Prostate gland (tissue), 2 donors: ENCODE measurements at regions of chr2 and their contacts with region 1.

Region 1: DNA sequence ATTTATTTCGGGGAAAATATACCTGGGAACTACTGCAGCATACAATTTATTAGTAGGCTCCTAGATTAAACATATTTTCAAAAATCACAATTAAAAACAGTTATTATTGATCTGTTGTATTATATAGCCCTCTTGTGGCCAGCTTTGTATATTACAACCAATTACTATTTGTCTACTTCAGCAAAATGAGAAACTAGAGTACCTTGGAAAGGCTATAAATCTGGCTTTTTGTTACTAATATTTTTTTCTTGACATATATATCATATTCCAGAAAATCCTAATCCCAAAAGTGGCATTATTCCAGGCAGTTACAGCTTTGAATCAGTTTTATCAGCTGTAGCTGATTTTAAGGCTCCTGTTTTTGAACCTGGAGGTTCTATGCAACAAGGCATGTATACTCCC is 101.2 kb downstream of the UBR3 start:
- DNase-seq: peak; percentile 13
- H3K4me3 ChIP-seq: no peak overlapping the region
- H3K27ac ChIP-seq: no peak overlapping the region
- H3K4me1 ChIP-seq: no peaks in the 10 kb centered on the region
- H3K27me3 ChIP-seq: no peaks in the 10 kb centered on the region
- CTCF ChIP-seq: peak; percentile 38 to 73 (median 69)
- POLR2A ChIP-seq: no peak

Region 2: GRCh38 chr2:169513926-169514325 is 414.5 kb before region 1 on chr2:
- intact Hi-C with region 1: no loop called
- DNase-seq: no peak
- H3K4me3 ChIP-seq: no peak overlapping the region
- H3K27ac ChIP-seq: no peak overlapping the region
- H3K4me1 ChIP-seq: no peaks in the 10 kb centered on the region
- H3K27me3 ChIP-seq: no peaks in the 10 kb centered on the region
- CTCF ChIP-seq: no peak
- POLR2A ChIP-seq: no peak

Region 3: DNA sequence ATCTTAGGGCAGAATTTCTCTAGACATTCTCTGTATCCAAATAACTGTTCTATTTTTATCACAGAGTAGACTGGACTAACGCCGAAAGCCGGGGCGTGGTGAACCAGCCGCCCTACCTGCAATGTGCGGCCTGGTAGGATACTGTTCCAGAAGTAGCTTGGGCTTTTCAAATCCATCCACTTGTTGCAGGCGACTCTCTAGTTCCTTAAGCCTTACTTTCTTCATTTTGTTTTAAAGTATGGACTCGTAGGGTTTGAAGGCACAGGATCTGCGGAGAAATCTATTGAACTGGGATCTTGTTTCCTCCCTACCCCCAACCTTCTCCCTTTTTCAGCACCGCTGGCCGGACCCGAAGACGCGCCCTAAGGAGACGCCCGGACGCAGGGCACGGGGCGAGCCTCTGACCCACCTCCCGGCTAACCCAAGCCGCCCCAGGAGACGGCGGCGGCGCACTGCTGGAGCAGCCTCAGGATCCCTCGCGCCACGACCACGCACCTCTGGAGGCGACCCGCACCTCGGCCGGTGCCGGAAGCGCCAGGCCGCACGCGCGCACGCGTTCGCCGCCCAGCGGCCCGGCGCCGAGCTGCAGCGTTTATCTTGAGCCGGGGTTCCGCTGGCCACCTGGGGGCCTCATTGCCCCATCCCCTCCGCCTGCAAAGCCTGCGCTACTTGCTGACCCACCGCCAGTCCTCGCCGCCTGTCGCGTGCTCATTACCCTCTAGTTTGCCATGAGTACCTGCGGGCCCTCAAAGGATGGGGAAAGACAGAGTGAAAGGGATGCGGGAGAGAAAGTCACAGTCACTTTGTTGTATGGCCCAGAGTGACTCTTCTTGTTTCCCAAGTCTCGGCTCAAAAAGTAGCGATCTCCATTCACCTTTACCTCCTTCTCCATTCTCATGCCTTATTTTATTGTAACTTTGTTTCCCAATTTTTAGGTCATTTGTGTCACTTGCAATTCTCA is 103.8 kb before region 1 on chr2 and contains the start of gene METTL5:
- intact Hi-C with region 1: loop called (anchors 2 kb)
- DNase-seq: peak; percentile 72
- H3K4me3 ChIP-seq: peak within 1 kb of the TSS; percentile 61 to 81
- H3K27ac ChIP-seq: peak within 1 kb of the TSS; percentile 79
- H3K4me1 ChIP-seq: peaks cover 12% of the 10 kb centered on the region
- H3K27me3 ChIP-seq: no peaks in the 10 kb centered on the region
- CTCF ChIP-seq: peak; percentile 87 to 97 (median 95)
- POLR2A ChIP-seq: peak; percentile 62
- total RNA-seq, gene METTL5: 34.9 to 43.9 TPM

Region 4: DNA sequence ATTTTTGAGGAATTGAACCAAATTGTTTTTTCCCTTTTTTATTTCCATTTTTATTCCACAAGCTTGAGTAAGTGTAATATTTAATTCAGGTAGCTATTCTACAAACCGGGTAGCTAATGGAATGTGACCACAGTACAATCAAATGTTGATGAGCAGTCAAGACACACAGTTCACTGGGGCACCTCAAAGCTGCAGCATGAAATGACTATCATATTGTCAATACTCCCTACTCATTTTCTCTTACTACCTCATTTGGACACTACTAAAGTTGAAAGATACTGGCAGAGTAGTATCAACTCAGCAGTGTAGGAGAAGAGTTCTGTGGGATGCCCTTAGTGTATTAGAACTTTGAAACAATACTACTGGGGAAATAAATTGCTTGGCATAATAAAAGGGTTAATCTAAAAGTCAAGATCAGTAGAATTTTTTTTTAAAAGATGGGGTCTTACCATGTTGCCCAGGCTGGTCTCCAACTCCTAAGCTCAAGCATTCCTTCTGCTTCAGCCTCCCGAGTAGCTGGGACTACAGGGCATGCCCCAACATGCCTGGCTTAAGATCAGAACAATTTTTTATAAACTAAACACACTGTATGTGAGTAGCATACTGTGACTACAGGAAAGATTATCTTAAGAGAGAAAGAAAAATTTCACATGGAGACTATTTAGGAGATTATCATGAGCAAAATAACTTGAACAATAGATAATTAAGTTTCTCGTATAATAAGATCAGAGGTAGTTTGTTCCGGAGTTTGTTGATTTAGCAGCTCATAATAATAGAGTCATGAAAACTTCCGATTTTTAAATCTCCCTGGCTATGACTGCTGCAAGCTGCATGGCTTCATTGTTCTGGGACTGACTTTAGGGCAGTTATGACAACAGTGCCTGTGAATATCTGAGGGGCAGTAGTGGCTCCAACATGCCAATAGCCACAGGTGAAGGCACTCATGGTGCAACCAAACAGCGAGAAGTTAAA is 293.1 kb after region 1 on chr2:
- intact Hi-C with region 1: no loop called
- DNase-seq: no peak
- H3K4me3 ChIP-seq: no peak overlapping the region
- H3K27ac ChIP-seq: no peak overlapping the region
- H3K4me1 ChIP-seq: peaks cover 5% of the 10 kb centered on the region
- H3K27me3 ChIP-seq: no peaks in the 10 kb centered on the region
- CTCF ChIP-seq: no peak
- POLR2A ChIP-seq: no peak